ENCODE measurements at regions of chr12 and their contacts with region 1.

Region 1: GRCh38 chr12:85029456-85029855 is 6.6 kb downstream of the TSPAN19 start:
- DNase-seq: no peak
- ATAC-seq: no peak

Region 2: GRCh38 chr12:84874125-84874824 is 155.2 kb before region 1 on chr12:
- intact Hi-C with region 1: loop called (anchors 2 to 10 kb)
- DNase-seq: no peak
- ATAC-seq: peak in 1 of 2 donors; percentile 63